ENCODE measurements at regions of chr19 and their contacts with region 1.

Region 1: GRCh38 chr19:53511933-53512374 is 26.0 kb upstream of the ZNF331 start:
- DNase-seq: peak; percentile 60 to 61
- H3K4me3 ChIP-seq: no peak overlapping the region
- H3K4me3 Mint-ChIP-seq: no peak overlapping the region
- H3K27ac Mint-ChIP-seq: no peak overlapping the region
- H3K4me1 ChIP-seq: peaks cover 8% of the 10 kb centered on the region; the same call in 1 of the 2 replicates
- H3K4me1 Mint-ChIP-seq: no peaks in the 10 kb centered on the region
- H3K27me3 ChIP-seq: no peaks in the 10 kb centered on the region
- H3K27me3 Mint-ChIP-seq: no peaks in the 10 kb centered on the region
- CTCF ChIP-seq: peak; percentile 63 to 64

Region 2: GRCh38 chr19:53195265-53195903 is 316.6 kb before region 1 on chr19:
- CTCF ChIA-PET with region 1: no interaction called
- POLR2A ChIA-PET with region 1: no interaction called
- intact Hi-C with region 1: loop called (anchors 10 kb)
- DNase-seq: peak; percentile 68 to 69
- H3K4me3 ChIP-seq: no peak overlapping the region
- H3K4me3 Mint-ChIP-seq: no peak overlapping the region
- H3K27ac Mint-ChIP-seq: no peak overlapping the region
- H3K4me1 ChIP-seq: no peaks in the 10 kb centered on the region
- H3K4me1 Mint-ChIP-seq: no peaks in the 10 kb centered on the region
- H3K27me3 ChIP-seq: no peaks in the 10 kb centered on the region
- H3K27me3 Mint-ChIP-seq: no peaks in the 10 kb centered on the region
- CTCF ChIP-seq: peak; percentile 78 to 84